HAP-1 (cell line): ENCODE measurements at regions of chr4 and their contacts with region 1.

Region 1: GRCh38 chr4:117134386-117134785 is 49.0 kb upstream of the TRAM1L1 start:
- DNase-seq: peak; percentile 56 to 79
- H3K4me3 ChIP-seq: no peak overlapping the region
- H3K4me1 ChIP-seq: no peaks in the 10 kb centered on the region
- H3K27me3 ChIP-seq: no peaks in the 10 kb centered on the region

Region 2: DNA sequence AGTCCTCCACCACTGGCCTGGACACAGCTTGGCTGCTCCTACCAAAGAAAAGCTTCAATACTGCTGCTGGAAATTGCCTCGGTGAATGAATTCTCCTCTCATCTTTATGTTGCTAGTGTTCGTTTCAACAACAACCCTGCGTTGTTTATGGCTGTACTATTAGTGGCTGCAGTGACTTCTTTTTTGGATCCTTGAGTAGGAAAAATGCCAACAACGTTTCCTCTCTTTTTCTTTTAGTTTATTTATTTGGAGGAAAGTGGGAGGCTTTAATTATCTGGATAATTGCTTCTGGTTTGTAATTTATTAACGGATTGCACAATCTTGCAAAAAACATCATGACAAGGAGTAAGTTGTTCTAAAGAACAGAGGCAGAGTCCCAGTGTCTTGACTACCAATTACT is 415.1 kb after region 1 on chr4:
- in situ Hi-C with region 1: no loop called
- DNase-seq: no peak
- H3K4me3 ChIP-seq: no peak overlapping the region
- H3K4me1 ChIP-seq: no peaks in the 10 kb centered on the region
- H3K27me3 ChIP-seq: no peaks in the 10 kb centered on the region

Region 3: DNA sequence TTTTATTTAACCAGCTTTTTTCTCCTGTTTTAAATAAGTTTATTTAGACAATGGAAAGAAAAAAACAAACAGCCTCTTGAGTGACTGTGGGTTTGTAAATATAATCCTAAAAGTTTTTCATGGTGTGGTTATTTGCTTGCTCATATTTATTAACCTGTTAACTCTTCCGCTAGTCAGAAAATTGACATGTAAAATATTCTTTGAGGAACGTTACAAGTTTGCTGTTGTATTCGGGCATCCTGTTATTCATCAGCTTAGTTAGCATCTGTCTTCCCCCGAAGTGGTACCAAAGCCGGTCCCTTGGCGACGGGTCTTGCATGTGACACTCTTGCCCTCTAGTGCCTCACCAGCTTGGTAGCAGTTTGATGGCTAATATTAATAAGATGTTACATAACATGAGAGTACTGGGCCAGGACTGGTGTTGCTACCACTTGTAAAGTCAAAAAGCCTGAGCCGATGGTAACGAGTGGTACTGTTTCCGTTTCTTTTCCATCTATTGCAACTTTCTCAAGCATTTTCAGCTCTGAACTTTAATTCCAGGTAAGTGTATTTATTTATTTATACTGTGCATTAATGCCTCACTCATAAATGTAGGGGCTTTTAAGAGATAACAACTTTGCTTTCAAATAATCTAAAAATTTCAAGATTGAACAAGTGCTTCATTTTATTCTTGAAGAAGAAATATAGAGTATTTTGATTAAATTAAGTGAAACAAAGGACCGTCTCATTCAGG is 899.8 kb after region 1 on chr4 and contains the start of gene NDST3:
- in situ Hi-C with region 1: loop called (anchors 25 kb)
- DNase-seq: peak; percentile 77 to 83
- H3K4me3 ChIP-seq: peak within 1 kb of the TSS; percentile 47
- H3K4me1 ChIP-seq: 0 out of 2 replicates have a peak, but pooled peaks cover 2% of the 10 kb centered on the region
- H3K27me3 ChIP-seq: no peaks in the 10 kb centered on the region